Head of caudate nucleus (tissue), 42 donors: ENCODE measurements at regions of chr14 and their contacts with region 1.

Region 1: GRCh38 chr14:103920981-103921854 is 7.0 kb upstream of the TDRD9 start:
- DNase-seq: peak; percentile 83 to 98 (median 95)

Region 2: GRCh38 chr14:103562429-103563225 is 358.6 kb before region 1 on chr14 and contains the starts of genes BAG5 and COA8:
- intact Hi-C with region 1: loop called (anchors 10 kb)
- DNase-seq: peak; percentile 68 to 95 (median 89)

Region 3: DNA sequence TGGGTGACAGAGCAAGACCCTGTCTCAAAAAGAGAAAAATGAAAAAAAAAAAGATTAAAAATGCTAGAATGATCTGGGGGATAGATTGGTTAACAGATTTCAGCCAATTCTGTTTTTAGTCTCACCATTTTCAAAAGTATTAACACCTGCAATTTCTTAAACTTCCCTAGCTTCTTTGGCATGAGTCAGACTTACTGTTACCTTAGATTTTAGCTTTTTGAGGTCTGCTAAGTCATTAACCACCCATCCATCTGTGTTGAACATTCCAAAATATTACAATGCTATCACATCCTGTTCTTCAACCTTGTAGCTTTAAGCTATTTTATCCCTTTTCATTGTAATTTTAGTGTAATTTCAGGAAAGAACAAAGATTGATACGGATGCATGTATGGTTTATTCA is 133.1 kb before region 1 on chr14:
- intact Hi-C with region 1: no loop called
- DNase-seq: no peak

Region 4: DNA sequence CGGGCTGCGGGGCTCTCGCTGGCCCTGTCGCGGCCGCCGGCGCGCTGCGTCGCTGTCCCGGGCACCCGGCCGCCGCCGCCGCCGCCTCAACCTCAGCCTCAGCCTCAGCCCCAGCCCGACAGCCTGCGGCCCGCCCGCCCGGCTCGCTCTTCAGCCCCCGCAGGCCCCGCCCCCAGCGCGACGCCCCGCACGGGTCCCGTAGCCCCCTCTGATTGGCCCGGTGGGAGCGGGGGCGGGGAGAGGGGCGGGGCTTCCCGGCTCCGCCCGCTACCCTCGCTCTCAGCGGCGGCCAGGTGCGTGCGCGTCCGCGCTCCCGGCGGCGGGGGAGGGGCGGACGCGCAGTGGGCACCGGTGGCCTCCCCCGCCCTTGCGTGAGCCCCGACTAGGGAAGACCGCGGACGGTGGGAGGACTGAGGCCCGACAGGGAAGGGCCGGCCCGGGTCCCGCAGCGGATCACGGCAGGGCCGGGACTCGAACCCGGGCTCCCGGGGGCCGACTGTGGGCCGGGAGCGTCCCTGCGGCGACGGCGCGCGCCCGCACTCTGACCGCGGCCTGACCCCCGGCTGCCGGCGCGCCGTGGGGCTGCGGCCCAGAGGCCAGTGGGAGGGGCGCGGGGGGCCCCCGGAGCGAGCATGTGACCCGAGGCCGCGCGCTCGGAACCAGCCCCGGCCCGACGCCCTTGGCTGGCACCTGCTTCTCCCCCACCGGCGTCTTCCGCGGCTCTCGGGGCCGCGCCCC is 73.6 kb before region 1 on chr14 and contains the start of gene PPP1R13B:
- intact Hi-C with region 1: loop called (anchors 5 kb)
- DNase-seq: peak; percentile 71 to 98 (median 94)